PC-9 (cell line): ENCODE measurements at regions of chr4 and their contacts with region 1.

Region 1: DNA sequence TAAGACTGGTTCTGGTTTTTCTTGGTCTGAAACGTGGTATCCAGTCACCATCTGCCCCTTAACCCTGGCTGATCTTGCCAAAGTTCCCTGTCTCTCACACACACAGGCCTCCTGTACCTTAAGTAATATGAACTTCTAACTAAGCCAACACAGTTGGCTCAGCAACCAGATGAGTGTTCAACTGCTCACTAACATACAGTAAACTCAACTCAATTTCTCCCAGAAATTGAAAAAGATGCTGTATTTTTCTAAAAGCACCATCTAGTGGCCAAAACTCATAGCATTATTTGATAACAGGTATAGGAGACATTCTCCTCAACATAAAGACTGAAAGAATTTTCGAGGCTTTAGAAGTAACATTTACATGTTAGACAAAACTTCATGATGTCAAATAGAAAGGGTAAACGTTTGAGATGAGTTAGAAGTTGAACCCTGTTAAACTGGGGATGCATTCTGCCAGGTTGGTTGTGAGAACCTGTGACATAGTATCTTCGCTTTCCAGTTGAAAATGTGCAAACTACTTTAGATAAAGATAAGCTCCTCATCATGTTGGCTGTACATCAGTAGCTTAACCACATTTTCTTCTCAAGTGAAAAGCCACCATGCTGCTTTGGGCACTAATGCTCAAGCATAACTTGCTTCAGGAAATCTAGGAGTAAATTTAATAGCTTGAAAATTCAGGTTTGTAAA is 31.2 kb downstream of the CCNI start:
- DNase-seq: no peak
- H3K4me3 ChIP-seq: no peak overlapping the region
- H3K27ac ChIP-seq: no peak overlapping the region
- H3K4me1 ChIP-seq: no peaks in the 10 kb centered on the region
- H3K27me3 ChIP-seq: no peaks in the 10 kb centered on the region
- CTCF ChIP-seq: peak; percentile 52

Region 2: DNA sequence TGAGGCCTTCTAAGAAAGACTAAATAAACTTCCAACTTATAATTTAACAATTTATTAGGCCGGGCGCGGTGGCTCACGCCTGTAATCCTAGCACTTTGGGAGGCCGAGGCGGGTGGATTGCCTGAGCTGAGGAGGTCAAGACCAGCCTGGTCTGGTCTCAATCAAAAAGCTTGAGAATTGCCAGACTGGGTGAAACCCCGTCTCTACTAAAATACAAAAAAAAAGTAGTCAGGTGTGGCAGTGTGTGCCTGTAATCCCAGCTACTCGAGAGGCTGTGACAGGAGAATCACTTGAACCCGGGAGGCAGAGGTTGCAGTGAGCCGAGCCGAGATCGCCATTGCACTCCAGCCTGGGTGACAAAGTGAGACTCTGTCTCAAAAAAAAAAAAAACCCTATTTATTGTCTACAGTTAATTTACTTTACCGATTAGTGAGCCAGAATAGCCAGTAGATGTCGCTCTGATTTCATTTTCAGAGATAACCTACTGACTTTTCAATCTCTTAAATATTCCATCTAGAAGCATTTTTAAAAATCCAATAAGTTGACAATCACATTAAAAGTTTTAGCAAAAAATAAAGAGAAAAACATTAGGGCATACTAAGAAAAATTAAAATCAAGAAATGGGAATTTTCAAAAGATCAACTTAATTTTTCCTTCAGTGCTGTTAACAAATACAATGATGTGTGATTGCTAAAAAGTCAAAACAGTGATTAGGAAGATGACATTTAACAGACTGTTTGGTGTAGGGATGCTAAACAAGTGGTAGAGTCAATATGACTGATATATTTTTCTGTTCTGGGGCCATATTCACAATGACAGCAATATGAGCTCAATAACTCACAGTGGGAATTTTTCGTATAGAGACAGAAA is 613.9 kb before region 1 on chr4:
- CTCF ChIA-PET with region 1: interaction called, 4 read pairs
- POLR2A ChIA-PET with region 1: no interaction called
- intact Hi-C with region 1: loop called (anchors 2 kb)
- DNase-seq: peak in 1 of 2 experiments; percentile 55
- H3K4me3 ChIP-seq: peak overlapping the region; percentile 33; the same call in 1 of the 2 replicates
- H3K27ac ChIP-seq: no peak overlapping the region
- H3K4me1 ChIP-seq: no peaks in the 10 kb centered on the region
- H3K27me3 ChIP-seq: no peaks in the 10 kb centered on the region
- CTCF ChIP-seq: peak; percentile 75

Region 3: GRCh38 chr4:76511947-76512346 is 532.7 kb before region 1 on chr4:
- CTCF ChIA-PET with region 1: no interaction called
- POLR2A ChIA-PET with region 1: no interaction called
- intact Hi-C with region 1: loop called (anchors 2 kb)
- DNase-seq: no peak
- H3K4me3 ChIP-seq: no peak overlapping the region
- H3K27ac ChIP-seq: no peak overlapping the region
- H3K4me1 ChIP-seq: no peaks in the 10 kb centered on the region
- H3K27me3 ChIP-seq: no peaks in the 10 kb centered on the region
- CTCF ChIP-seq: no peak

Region 4: GRCh38 chr4:76748649-76749048 is 296.0 kb before region 1 on chr4:
- CTCF ChIA-PET with region 1: interaction called, 17 read pairs
- POLR2A ChIA-PET with region 1: no interaction called
- intact Hi-C with region 1: no loop called
- DNase-seq: peak; percentile 22 to 49
- H3K4me3 ChIP-seq: no peak overlapping the region
- H3K27ac ChIP-seq: no peak overlapping the region
- H3K4me1 ChIP-seq: peaks cover 5% of the 10 kb centered on the region; the same call in 1 of the 2 replicates
- H3K27me3 ChIP-seq: no peaks in the 10 kb centered on the region
- CTCF ChIP-seq: no peak

Region 5: DNA sequence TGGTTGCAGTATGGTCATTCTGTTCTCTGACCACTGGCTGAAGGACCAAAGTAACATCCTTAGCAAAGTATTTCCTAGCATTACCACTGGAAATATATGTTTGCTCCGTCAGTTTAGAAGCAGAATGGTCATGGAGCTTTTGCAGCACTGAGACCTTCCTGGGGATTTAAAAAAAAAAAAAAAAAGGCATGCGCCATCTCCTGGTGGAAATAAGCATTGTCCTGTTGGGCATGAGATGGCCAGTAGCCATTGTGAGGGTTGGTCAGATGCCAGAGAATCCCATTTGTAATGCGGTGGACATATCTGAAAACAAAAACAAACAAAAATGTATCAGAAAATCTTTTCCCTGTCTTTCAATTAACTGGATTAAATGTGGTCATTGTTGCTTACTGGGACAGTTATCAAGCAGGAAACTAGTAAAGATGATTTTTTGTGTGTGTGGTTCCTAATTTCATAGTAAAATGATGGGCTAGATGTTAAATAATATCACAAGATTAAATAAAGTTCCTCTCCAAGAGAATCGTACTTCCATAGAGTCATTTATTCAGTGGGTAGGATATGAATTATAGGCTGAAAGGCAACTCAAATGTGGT is 286.2 kb before region 1 on chr4:
- CTCF ChIA-PET with region 1: no interaction called
- POLR2A ChIA-PET with region 1: no interaction called
- intact Hi-C with region 1: loop called (anchors 5 kb)
- DNase-seq: peak; percentile 24 to 43
- H3K4me3 ChIP-seq: no peak overlapping the region
- H3K27ac ChIP-seq: no peak overlapping the region
- H3K4me1 ChIP-seq: no peaks in the 10 kb centered on the region
- H3K27me3 ChIP-seq: no peaks in the 10 kb centered on the region
- CTCF ChIP-seq: peak; percentile 78

Region 6: GRCh38 chr4:76949276-76950051 is 95.1 kb before region 1 on chr4 and contains the start of gene SEPTIN11:
- CTCF ChIA-PET with region 1: no interaction called
- POLR2A ChIA-PET with region 1: no interaction called
- intact Hi-C with region 1: loop called (anchors 5 kb)
- DNase-seq: peak; percentile 67 to 85
- H3K4me3 ChIP-seq: peak within 1 kb of the TSS; percentile 70
- H3K27ac ChIP-seq: peak within 1 kb of the TSS; percentile 51
- H3K4me1 ChIP-seq: peaks cover 14% of the 10 kb centered on the region; the same call in 1 of the 2 replicates
- H3K27me3 ChIP-seq: no peaks in the 10 kb centered on the region
- CTCF ChIP-seq: no peak
- total RNA-seq, gene SEPTIN11: 38.8 and 48.1 TPM in 2 replicates

Region 7: DNA sequence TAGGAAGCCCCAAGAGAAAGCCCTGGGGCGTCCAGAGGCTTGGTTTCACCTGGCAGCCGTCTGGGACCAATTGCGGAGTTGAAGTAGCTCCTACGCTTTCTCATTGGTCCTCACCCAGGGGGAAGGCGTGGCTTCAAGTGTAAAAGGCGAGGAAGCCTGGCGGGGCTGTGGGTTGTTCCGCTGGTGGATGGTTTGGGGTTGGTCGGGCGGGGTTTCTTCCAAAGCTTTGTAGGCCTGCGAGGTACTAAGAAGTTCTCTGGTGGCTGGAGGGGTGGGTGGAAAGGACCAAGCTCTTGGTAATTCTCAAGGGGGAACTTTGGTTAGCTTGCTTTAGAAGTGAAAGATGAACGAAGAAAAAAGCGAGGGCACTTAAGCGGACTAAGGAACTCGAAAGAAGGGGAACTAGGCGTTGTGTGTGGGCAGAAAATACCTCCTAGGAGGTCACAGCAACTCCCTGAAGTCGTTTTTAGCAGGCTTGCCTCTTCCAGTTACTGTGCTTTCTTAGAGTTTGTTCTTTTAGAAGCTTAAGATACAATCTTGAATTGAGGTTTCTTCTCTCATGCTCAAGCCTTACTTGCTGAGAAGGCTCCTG is 149.0 kb after region 1 on chr4:
- CTCF ChIA-PET with region 1: no interaction called
- POLR2A ChIA-PET with region 1: no interaction called
- intact Hi-C with region 1: no loop called
- DNase-seq: no peak
- H3K4me3 ChIP-seq: no peak overlapping the region
- H3K27ac ChIP-seq: no peak overlapping the region
- H3K4me1 ChIP-seq: peaks cover 24% of the 10 kb centered on the region
- H3K27me3 ChIP-seq: no peaks in the 10 kb centered on the region
- CTCF ChIP-seq: no peak

Region 8: DNA sequence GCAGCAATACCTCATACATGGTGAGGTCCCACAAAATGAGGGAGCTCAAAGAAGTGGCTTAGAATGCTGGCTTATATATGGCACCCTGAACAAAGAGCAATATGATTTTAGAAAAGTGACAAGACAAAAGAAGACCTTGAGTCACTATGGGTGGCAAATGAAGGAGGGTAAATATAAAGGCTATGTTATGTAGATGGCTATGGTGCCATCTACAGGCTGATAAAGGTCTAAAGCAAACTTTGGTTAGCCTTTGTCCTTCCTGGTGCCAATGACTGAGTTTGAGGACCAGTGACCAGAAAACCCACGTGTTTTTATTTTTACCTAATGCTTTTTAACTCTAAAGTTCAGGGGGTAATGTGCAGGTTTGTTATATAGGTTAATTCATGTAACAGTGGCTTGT is 264.2 kb after region 1 on chr4:
- CTCF ChIA-PET with region 1: no interaction called
- POLR2A ChIA-PET with region 1: no interaction called
- intact Hi-C with region 1: loop called (anchors 1 kb)
- DNase-seq: no peak
- H3K4me3 ChIP-seq: no peak overlapping the region
- H3K27ac ChIP-seq: no peak overlapping the region
- H3K4me1 ChIP-seq: no peaks in the 10 kb centered on the region
- H3K27me3 ChIP-seq: no peaks in the 10 kb centered on the region
- CTCF ChIP-seq: peak; percentile 70